Posterior vena cava (tissue), 2 donors: ENCODE measurements at regions of chr11 and their contacts with region 1.

Region 1: GRCh38 chr11:10727146-10727851 is 23.7 kb upstream of the CTR9 start:
- DNase-seq: no peak

Region 2: DNA sequence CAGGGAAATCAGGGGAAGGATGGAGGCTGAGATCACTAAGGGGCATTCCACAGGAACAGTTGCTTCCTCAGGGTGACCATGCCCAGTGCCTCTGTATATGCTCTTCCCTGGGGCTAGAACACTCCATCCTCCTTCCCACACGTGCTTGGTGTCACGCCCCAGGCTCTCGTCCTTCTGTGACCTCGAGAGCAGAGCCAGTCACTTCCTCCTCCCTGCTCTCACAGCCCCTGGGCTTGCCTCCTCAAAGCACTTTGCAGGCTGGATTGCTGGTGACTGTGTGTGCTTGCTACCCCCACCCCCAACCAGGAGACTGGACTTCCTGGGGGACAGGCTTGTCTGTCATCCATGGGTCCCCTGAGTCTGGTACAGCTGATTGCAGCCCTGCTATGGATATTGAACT is 328.8 kb before region 1 on chr11:
- intact Hi-C with region 1: loop called in 1 of 2 experiments (anchors 5 kb)
- DNase-seq: peak; percentile 85

Region 3: GRCh38 chr11:10699072-10699471 is 28.2 kb before region 1 on chr11:
- intact Hi-C with region 1: loop called in 1 of 2 experiments (anchors 2 kb)
- DNase-seq: no peak

Region 4: DNA sequence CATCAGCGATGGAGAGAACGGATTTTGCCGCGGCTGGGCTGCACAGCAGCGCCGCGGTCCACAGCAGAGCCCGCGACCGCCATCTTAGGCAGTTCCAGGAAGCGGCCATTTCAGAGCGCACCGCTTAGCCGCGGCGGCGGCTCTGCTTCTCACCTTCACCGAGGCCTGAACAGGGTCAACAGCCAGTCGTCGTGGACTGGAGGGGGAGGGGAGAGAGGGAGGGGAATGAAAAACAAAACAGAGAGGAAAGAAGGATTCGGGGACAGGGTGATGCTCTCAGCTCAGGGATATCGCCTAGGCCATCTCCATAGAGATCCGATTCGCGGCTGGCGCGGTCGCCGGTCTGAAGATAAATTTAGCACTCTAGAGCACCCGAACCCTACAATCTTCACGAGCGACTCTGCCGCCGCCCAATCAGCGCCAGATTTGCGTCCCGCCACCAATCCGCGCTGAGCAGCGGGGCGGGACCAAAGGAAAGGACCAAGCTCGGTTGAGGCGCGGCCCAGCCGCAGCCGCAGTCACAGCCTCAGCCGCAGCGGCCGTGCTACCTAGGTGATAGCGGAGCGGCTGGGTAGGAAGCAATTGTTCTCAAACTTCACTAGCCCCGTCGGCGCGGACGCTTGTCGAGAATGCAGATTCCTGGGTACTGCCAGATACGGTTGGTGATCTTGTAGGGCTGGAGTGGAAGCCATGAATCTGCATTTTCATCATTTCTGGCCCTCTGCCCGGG is 130.6 kb after region 1 on chr11 and contains the start of gene ZBED5:
- intact Hi-C with region 1: no loop called
- DNase-seq: peak; percentile 99
- total RNA-seq, gene ZBED5: 39.2 to 40.5 TPM

Region 5: GRCh38 chr11:12090061-12090591 is 1362.8 kb after region 1 on chr11:
- intact Hi-C with region 1: no loop called
- DNase-seq: no peak